ENCODE measurements at regions of chr3 and their contacts with region 1.

Region 1: DNA sequence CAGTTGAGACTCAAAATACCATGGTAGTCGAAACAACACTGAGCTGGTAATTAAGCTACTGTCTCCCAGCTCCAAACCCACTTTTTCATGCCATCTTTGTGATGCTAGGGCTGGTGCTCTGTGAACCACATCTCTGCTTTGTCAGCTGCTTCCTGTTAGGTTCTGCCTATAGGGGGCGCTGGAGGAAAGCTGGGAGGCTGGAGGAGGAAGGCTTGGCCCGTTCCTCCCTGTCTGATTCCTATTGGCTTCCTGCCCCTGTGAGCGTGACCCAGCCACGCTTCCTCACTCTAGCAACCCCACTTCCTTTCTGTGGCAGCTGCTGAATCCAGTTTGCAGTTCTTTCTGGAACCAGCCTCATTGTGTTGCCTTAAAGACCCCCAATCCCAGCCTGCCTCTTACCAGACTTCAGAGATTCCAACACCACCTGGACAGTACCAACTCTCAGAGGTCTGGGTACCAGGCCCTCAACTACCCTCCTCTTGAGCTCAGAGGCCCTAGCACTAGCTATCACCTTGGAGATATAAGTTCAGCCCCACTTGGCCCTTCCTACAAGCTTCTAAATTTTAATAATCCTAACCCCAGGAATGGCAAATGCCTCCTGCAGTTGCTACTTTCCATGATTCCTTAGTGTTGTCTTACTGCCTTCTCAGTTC is 120.9 kb downstream of the ERC2 start:
- DNase-seq: peak; percentile 47 to 71 (median 52)
- ATAC-seq: peak; percentile 43 to 88 (median 77)
- H3K4me3 ChIP-seq: no peak overlapping the region
- H3K27ac ChIP-seq: no peak overlapping the region
- H3K4me1 ChIP-seq: no peaks in the 10 kb centered on the region
- H3K27me3 ChIP-seq: no peaks in the 10 kb centered on the region
- CTCF ChIP-seq: peak; percentile 24 to 47 (median 29)

Region 2: DNA sequence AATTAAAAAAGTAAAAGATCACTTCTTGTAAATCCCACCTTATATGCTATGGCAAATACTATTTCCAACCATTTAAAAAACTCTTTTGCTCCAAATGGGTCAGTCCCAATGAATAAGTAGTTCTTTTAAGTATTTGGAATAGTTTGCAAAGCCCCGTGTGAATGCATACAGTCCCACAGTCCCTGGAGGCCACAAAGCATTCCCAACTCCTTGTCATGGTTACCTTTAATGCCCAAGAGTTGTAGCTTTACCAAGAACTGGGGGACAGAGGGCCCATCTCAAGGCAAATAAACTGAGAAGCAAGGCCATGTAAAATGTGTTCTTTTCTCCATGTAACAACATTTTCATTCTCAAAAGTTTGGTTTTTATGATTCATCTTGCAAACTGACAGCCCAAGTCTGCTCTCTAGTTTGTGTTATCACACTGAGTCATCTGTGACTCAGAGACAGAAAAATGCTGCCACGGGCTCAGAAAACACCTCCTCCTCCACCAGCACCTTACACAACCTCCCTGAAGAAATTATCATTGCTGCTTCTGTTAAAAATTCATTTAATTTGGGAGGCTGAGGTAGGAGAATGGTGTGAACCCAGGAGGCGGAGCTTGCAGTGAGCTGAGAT is 215.3 kb before region 1 on chr3:
- intact Hi-C with region 1: no loop called
- DNase-seq: no peak
- ATAC-seq: peak in 2 of 4 donors; percentile 79 to 80
- H3K4me3 ChIP-seq: no peak overlapping the region
- H3K27ac ChIP-seq: no peak overlapping the region
- H3K4me1 ChIP-seq: no peaks in the 10 kb centered on the region
- H3K27me3 ChIP-seq: no peaks in the 10 kb centered on the region
- CTCF ChIP-seq: no peak

Region 3: GRCh38 chr3:56443372-56443771 is 96.0 kb after region 1 on chr3:
- intact Hi-C with region 1: loop called in 2 of 3 experiments (anchors 5 to 10 kb)
- DNase-seq: no peak
- ATAC-seq: no peak
- H3K4me3 ChIP-seq: no peak overlapping the region
- H3K27ac ChIP-seq: no peak overlapping the region
- H3K4me1 ChIP-seq: no peaks in the 10 kb centered on the region
- H3K27me3 ChIP-seq: no peaks in the 10 kb centered on the region
- CTCF ChIP-seq: no peak

Region 4: DNA sequence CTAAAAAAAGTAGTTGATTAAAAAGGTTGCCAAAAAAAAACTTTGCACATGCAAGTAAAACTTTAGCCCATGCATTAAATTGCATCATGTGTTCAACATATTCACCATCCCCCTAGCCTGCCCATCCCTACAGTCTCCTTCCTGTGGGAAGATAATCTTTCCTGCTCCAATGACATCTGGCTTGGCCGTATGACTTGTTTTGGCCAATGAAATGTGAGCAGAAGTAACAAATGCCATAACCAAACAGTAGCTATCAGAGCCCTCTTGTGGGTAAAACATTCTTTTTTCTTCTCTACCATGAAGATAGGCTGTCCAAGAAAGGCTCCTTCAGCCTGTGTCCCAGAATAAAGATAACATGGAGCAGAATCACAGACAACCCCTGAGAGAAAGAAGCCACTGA is 105.7 kb after region 1 on chr3:
- intact Hi-C with region 1: loop called in 2 of 3 experiments (anchors 5 to 10 kb)
- DNase-seq: no peak
- ATAC-seq: no peak
- H3K4me3 ChIP-seq: no peak overlapping the region
- H3K27ac ChIP-seq: no peak overlapping the region
- H3K4me1 ChIP-seq: no peaks in the 10 kb centered on the region
- H3K27me3 ChIP-seq: no peaks in the 10 kb centered on the region
- CTCF ChIP-seq: no peak

Measured in pancreas (tissue), 10 donors.